Dorsolateral prefrontal cortex (tissue), 120 donors: ENCODE measurements at regions of chr17 and their contacts with region 1.

Region 1: DNA sequence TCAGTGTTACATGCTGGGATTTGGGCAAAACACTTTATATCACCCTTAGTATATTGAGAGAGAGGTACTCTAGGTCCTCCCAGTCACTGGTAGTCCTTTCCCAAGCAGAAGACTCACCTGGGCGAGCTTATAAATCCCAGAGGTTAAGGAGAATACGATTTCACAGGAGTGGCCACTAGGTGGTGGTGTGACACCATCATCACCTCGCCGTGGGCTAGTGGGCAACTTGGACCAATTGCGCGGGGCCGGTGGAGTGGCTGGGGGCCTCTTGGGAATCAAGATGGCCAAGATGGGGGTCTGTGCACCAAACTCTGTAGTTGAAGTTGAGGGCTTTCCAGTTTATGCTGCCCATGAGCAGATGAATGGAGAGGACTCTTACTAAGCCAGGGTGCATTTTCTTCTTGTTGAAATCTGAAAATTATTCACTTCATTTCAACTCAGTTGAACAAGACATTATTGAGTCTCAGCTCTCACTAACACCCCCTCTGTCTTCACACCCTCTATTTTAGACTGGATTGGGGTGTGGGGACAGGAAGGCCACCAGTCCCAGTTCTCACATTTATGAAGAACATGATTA is 38.2 kb upstream of the PIRT start:
- DNase-seq: peak in 8 of 10 donors; percentile 9 to 66 (median 60)
- H3K4me3 ChIP-seq: peak overlapping the region in 4 of 59 donors; percentile 11 to 19 (median 16)
- H3K27ac ChIP-seq: peak overlapping the region in 10 of 59 donors; percentile 8 to 38 (median 20)
- H3K27me3 ChIP-seq: no peaks in the 10 kb centered on the region
- CTCF ChIP-seq: peak; percentile 69 to 94 (median 82)

Region 2: DNA sequence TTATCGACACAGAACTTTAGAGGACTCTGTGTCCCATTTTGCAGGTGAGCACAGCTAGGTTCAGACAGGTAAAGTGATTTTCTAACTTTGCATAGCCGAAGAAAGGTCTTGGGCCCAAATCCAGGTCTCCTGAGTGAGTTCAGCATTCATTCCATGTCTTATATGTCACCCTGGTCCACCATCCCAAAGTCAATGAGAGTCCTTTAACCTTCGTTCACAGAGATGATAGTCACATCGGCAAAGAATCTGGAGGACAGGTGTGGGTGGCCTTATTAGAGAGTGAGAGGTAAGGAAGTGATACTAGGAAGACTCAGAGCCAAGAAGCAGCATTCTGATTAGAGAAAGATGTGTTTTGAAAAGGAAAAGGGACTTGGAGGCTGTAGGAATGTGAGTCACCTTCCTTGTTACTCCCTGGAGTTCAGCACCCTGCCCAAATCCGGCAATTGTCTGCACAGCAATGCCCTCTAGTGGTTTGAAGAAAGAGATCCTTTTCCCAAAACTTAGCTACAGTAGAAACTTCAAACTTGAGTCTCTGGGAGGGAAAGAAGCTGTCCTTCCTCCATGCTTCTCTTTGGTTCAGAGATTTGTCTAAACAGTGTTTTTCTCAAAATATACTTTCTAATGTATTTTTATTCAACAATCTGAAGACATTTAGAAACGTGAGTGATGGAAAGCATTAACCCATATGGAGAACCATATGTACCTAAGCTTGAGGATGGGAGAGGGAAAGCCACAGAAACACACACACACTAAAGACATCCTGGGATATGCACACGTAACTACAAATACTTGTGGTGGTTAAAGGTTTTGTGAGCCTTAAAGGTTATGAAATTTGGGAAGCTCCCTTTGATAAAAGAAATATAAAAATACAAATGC is 268.5 kb after region 1 on chr17:
- intact Hi-C with region 1: loop called (anchors 2 to 5 kb)
- DNase-seq: peak in 5 of 10 donors; percentile 24 to 48 (median 39)
- H3K4me3 ChIP-seq: no peak overlapping the region
- H3K27ac ChIP-seq: no peak overlapping the region
- H3K27me3 ChIP-seq: no peaks in the 10 kb centered on the region
- CTCF ChIP-seq: peak; percentile 55 to 89 (median 78)

Region 3: DNA sequence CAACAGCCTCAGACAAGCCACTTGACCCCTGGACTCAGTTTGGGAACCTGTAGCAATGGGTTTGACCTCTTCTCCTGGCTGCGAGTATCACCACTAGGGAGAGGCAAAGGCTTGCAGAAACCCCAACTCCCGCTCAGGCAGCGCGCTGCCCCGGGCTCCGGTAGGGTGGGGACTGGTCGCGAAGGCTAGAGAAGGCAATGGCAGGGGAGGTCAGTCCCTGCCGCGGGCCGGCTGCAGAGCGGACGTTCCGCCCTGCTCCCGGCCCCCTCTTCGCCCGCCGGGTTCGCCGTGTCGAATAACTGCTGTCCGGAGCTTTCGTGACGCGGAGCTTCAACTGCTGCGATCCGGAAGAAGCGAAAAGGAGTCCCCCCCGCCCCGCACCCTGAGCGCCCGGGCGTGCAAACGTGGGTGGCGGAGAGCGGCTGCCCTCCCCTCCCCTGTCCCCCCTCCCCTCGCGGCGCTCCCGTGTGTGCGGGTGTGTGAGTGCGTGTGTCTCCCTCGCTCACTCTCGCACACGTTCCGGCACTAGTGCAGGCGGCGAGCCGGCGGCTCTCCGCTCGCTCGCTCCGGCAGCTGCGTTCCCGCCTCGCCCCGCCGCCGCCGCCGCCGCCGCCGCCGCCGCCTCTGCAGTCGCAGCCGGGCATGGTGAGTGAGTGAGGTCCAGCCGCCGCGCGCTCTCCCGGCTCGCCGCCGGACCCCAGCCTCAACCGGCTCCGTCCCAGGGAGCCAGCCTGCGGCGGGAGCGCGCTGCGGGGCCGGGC is 364.2 kb after region 1 on chr17:
- intact Hi-C with region 1: loop called in 1 of 2 experiments (anchors 10 kb)
- DNase-seq: peak in 6 of 10 donors; percentile 20 to 62 (median 42)
- H3K4me3 ChIP-seq: peak overlapping the region; percentile 14 to 69 (median 53)
- H3K27ac ChIP-seq: peak overlapping the region in 10 of 59 donors; percentile 6 to 55 (median 36)
- H3K27me3 ChIP-seq: peaks cover 0 to 55% (median 27%) of the 10 kb centered on the region in 45 donors
- CTCF ChIP-seq: peak in 47 of 56 donors; percentile 14 to 64 (median 36)

Region 4: DNA sequence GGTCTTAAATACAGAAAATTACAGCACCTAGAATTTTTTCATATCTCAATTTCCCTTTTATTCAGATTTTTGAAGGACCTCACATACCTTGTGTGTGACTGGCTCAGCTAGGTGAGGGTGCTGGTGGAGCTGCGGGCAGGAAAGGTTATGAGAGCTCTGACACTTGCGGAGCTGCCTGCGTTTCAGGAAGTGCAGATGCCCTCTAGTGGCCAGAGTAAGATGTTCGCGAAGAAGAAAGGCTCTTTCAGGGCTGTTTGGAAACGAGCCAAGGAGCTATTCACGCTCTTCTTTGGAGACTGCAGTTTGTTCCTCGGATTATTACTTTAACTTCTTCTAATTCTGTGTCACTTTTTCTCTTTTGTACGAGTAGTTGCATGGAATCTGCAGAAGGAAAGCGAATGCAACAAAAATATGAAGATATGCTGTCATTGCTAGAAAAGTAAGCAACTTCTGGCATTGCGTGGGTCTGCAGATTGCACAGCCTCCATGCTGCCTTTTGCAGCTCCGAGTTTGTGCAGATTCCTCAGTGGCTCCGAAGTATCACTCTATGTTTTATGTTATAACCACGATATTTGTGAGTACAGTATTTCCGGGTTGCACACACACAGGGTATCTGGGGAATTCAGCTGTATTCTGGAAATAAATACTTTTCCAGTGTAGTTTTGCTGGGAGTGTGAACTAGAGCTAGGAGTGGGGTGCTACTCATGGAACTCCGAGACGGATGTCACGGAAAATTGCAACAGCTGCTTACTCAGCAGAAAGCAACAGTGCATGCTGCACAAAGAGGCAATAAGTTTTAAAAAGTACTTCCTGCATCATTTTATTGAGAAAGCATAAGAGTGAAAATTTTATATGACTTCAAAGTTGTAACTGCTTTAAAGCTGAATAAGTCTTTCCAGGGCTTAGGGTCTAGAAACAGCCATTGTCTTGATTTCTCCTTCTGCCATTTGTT is 768.5 kb after region 1 on chr17:
- intact Hi-C with region 1: loop called in 1 of 2 experiments (anchors 5 kb)
- DNase-seq: peak in 9 of 10 donors; percentile 30 to 81 (median 61)
- H3K4me3 ChIP-seq: peak overlapping the region in 47 of 59 donors; percentile 1 to 62 (median 36)
- H3K27ac ChIP-seq: no peak overlapping the region
- H3K27me3 ChIP-seq: no peaks in the 10 kb centered on the region
- CTCF ChIP-seq: peak; percentile 75 to 97 (median 87)

Region 5: GRCh38 chr17:11742886-11743285 is 866.8 kb after region 1 on chr17:
- intact Hi-C with region 1: loop called in 1 of 2 experiments (anchors 5 kb)
- DNase-seq: peak in 1 of 10 donors; percentile 24
- H3K4me3 ChIP-seq: no peak overlapping the region
- H3K27ac ChIP-seq: no peak overlapping the region
- H3K27me3 ChIP-seq: no peaks in the 10 kb centered on the region
- CTCF ChIP-seq: peak in 26 of 56 donors; percentile 14 to 57 (median 28)

Region 6: DNA sequence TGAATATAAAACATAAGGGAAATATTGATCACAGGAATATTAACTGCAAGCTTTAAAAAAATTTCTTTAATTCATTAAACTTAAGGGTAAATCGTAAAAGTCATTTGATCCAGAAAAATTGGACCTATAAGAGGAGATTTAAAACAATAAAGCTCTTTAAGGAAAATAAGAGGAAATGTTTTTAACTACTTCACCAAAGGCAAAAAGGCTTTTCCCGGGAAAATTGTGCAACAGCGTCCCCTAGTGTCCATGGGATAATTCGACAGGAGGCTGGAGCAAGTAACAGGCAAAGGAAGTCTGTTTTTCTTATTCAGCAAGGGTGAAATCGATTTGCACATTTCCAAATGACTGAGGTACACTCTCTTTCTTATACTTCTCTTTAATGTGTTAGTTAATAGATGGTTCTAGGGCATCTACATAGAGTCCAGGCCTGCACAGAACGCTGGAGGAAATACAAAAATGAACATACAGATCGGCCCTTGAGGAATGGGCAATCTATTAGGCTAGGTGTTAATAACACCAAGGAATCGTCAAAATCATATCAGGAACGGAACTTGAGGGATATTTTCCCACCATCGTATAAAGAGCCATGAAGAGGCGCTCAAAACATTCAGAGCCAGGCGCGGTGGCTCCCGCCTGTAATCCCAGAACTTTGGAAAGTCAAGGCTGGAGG is 1059.8 kb after region 1 on chr17:
- intact Hi-C with region 1: loop called in 1 of 2 experiments (anchors 2 kb)
- DNase-seq: peak in 8 of 10 donors; percentile 9 to 72 (median 62)
- H3K4me3 ChIP-seq: no peak overlapping the region
- H3K27ac ChIP-seq: no peak overlapping the region
- H3K27me3 ChIP-seq: no peaks in the 10 kb centered on the region
- CTCF ChIP-seq: peak; percentile 74 to 97 (median 91)

Region 7: DNA sequence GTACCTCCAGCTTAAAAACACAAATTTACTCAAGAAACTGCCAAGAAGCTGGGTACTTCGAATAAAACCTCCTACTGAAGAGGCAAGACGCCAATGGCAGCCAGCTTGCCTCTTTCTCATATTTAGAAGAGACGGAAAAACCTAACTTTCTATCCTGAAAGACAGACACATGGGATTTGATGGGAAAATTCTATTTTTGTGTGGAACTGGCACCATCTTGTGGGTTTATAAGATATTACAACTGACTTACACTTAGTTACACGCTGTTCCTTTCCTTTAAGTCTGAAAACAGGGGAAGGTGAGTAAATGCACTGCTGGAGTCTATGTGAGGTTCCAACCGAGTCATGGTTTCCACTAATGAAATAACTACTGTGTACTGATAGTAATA is 1110.9 kb after region 1 on chr17:
- intact Hi-C with region 1: loop called (anchors 2 to 10 kb)
- DNase-seq: no peak
- H3K4me3 ChIP-seq: no peak overlapping the region
- H3K27ac ChIP-seq: peak overlapping the region in 1 of 59 donors; percentile 44
- H3K27me3 ChIP-seq: no peaks in the 10 kb centered on the region
- CTCF ChIP-seq: peak; percentile 22 to 84 (median 66)